ENCODE measurements at regions of chr1 and their contacts with region 1.

Region 1: DNA sequence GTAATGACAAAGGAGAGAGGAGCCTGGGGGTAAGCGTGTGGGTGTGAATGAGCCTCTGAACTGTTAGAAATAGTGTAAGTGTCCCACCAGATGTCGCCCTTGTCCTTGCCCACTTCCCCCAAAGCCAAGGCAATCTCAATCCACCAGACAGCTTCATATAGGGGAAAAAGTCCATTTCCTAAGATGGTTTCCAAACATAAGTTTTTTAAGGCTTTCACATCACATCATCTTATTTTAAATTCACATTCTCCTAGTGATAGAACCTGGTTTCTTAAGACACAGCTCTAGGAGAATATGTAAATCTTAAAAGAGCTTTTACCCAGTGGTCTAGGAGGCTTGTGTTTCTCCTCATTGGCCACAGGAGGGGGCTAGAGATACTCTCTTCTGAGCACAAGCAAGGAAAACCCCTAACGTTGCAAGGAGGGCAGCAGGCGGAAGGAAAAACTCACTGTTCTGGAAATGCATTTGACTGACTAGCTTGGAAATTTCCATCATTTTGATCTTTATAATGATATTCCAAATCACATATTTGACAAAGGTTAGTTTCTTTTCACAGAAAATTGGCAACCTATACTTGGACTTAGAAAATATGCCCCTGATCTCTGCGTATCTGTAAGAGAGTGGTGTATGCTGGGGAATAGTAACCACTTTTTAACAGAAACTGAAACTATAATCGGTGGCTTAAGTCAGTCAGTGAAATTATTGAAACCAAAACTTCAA is 51.9 kb upstream of the LPAR3 start:
- DNase-seq: peak; percentile 59 to 97
- ATAC-seq: peak; percentile 93 to 98 (median 93)
- H3K4me3 ChIP-seq: peak overlapping the region; percentile 47
- H3K4me3 Mint-ChIP-seq: peak overlapping the region; percentile 88
- H3K27ac ChIP-seq: peak overlapping the region; percentile 82
- H3K27ac Mint-ChIP-seq: peak overlapping the region; percentile 96 to 99
- H3K4me1 ChIP-seq: peaks cover 9% of the 10 kb centered on the region
- H3K4me1 Mint-ChIP-seq: peaks cover 12 to 18% of the 10 kb centered on the region in 2 donors
- H3K27me3 ChIP-seq: no peaks in the 10 kb centered on the region
- H3K27me3 Mint-ChIP-seq: peaks cover 3 to 8% of the 10 kb centered on the region in 2 donors
- CTCF ChIP-seq: peak; percentile 99

Region 2: DNA sequence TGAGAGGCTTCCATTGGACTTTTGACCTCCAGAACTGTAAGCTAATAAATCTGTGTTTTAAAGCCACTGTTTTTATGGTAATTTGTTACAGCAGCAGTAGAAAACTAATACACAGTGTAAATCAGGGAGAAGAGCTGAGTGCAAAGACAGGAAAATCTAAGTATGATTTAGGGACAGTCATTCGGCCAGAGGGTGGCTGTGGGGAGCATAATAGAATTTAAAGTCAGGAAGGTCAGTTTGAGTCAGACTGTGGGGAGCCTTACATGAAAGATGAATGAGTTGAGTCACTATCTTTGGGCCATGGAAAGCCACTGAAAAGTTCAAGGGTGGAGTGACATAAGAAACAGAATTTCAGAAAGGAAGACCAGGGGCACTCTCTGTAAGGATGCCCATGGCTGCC is 202.3 kb before region 1 on chr1:
- intact Hi-C with region 1: no loop called
- DNase-seq: no peak
- ATAC-seq: no peak
- H3K4me3 ChIP-seq: no peak overlapping the region
- H3K4me3 Mint-ChIP-seq: no peak overlapping the region
- H3K27ac ChIP-seq: no peak overlapping the region
- H3K27ac Mint-ChIP-seq: no peak overlapping the region
- H3K4me1 ChIP-seq: no peaks in the 10 kb centered on the region
- H3K4me1 Mint-ChIP-seq: no peaks in the 10 kb centered on the region
- H3K27me3 ChIP-seq: peaks cover 2% of the 10 kb centered on the region
- H3K27me3 Mint-ChIP-seq: peaks cover 0 to 13% of the 10 kb centered on the region in 2 donors
- CTCF ChIP-seq: no peak

Region 3: GRCh38 chr1:85015826-85016225 is 70.9 kb after region 1 on chr1:
- intact Hi-C with region 1: no loop called
- DNase-seq: no peak
- ATAC-seq: no peak
- H3K4me3 ChIP-seq: no peak overlapping the region
- H3K4me3 Mint-ChIP-seq: no peak overlapping the region
- H3K27ac ChIP-seq: no peak overlapping the region
- H3K27ac Mint-ChIP-seq: no peak overlapping the region
- H3K4me1 ChIP-seq: no peaks in the 10 kb centered on the region
- H3K4me1 Mint-ChIP-seq: no peaks in the 10 kb centered on the region
- H3K27me3 ChIP-seq: no peaks in the 10 kb centered on the region
- H3K27me3 Mint-ChIP-seq: peaks cover 7 to 29% of the 10 kb centered on the region in 2 donors
- CTCF ChIP-seq: no peak

Region 4: DNA sequence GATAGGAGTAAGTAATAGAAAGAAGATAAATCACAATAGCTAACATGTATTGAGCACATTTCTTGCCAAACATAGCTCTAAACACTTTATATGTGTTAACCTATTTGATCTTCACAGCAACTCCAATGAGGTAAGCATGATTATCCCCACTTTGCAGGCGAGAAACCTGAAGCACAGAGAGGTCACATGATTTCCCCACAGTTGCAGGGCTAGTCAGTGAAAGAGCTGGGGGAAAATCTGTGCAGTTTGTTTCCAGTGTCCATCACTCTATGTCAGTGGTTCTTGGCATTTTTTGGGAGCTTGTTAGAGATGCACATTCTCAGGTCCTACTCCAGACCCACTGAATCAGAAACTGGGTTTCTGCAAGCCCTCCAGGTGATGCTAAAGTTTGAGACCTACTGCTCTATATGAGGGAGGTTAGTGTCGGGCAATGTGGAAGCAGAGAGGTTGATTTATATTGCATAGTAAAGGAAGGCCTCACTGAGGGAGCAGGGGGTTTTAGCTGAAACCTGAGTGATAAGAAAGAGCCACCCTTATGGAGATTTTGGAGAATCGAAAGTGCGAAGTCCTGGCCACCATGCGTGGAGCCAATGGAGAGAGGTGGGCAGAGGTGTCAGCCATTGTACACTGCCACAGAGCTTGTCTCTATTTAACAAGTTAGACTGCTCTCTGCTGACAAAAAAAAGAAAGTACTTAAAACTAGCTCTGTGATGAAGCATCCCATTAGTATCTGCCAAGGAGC is 82.5 kb after region 1 on chr1:
- intact Hi-C with region 1: loop called (anchors 1 kb)
- DNase-seq: peak in 1 of 2 donors; percentile 74
- ATAC-seq: peak; percentile 83 to 86 (median 85)
- H3K4me3 ChIP-seq: peak overlapping the region; percentile 1
- H3K4me3 Mint-ChIP-seq: peak overlapping the region; percentile 15
- H3K27ac ChIP-seq: peak overlapping the region; percentile 46
- H3K27ac Mint-ChIP-seq: peak overlapping the region; percentile 19 to 87
- H3K4me1 ChIP-seq: peaks cover 8% of the 10 kb centered on the region
- H3K4me1 Mint-ChIP-seq: peaks cover 9% of the 10 kb centered on the region in 2 donors
- H3K27me3 ChIP-seq: no peaks in the 10 kb centered on the region
- H3K27me3 Mint-ChIP-seq: peaks cover 5 to 8% of the 10 kb centered on the region in 2 donors
- CTCF ChIP-seq: no peak

Region 5: DNA sequence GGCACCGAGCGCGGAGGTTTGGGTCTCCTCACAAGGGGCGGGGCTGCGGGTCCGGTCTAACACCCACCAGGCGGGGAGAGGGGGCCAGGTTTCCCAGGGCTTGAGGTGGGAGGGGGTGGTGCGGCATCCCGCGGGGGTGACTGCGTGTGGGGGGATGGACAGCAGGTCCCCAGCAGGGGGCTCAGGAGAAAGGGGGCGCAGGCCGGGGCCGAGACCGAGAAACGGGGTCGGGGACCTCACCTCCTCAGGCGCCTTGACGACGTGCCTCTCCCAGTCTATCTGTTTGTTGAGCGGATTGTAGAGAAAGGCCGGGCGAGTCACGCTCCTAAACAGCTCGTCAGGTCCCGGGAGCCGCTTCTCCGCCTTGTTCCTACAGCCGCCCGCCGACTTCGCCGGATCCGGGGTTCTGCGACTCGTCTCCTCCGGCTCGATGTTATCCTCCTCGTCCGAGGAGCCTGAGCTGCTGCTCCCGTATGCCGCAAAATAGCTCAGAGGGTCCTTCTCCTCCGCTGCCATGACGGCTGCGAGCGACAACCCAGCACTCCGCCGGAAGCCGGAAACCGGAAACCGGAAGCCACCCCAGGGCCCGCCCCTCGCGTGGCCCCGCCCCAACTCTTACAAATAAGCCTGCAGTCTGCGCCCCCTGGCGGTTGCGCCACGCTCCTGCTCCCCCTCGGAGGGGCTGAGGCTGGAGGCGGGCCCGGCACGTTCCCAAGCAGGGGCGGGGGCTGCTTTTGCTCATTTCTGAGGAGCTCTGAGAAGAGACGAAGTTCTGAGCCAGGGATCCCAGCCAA is 314.4 kb after region 1 on chr1 and contains the start of gene C1orf52:
- intact Hi-C with region 1: loop called (anchors 1 kb)
- DNase-seq: peak; percentile 94 to 97
- ATAC-seq: peak; percentile 96 to 100 (median 97)
- H3K4me3 ChIP-seq: peak within 1 kb of the TSS; percentile 86
- H3K4me3 Mint-ChIP-seq: peak within 1 kb of the TSS; percentile 98
- H3K27ac ChIP-seq: peak within 1 kb of the TSS; percentile 76
- H3K27ac Mint-ChIP-seq: peak within 1 kb of the TSS; percentile 94 to 98
- H3K4me1 ChIP-seq: peaks cover 20% of the 10 kb centered on the region
- H3K4me1 Mint-ChIP-seq: peaks cover 31 to 33% of the 10 kb centered on the region in 2 donors
- H3K27me3 ChIP-seq: no peaks in the 10 kb centered on the region
- H3K27me3 Mint-ChIP-seq: no peaks in the 10 kb centered on the region
- CTCF ChIP-seq: peak; percentile 99
- total RNA-seq, gene C1orf52: 50.6 to 67.3 (median 58.9) TPM

Measured in natural killer cell (primary cell).